Naive thymus-derived CD4-positive, alpha-beta T cell (primary cell): ENCODE measurements at regions of chrX and their contacts with region 1.

Region 1: DNA sequence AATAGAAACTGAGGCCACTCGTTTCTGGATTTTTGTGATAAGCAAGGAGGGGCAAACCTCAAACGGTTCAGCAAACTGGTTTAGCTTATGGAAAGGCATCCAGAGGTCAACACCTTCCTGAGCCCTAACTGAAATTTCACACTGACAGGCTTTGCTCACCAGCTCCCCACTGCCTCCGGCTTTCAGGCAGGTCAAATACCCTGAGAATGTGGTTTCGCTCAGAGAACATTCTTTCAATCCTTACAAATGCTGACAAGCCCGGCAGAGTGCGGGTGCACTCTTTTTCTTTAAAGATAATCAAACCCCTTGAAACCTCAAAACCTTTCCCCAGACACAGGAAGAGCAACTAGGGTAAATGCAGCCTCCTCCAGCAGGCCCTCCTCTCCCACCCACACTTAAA is 41.5 kb downstream of the CD40LG start:
- DNase-seq: peak in 2 of 9 donors; percentile 17 to 31
- ATAC-seq: peak; percentile 23
- H3K4me3 ChIP-seq: no peak overlapping the region
- H3K4me3 Mint-ChIP-seq: peak overlapping the region; percentile 55 to 80 (median 64)
- H3K27ac ChIP-seq: peak overlapping the region; percentile 81
- H3K27ac Mint-ChIP-seq: peak overlapping the region; percentile 76 to 97 (median 91)
- H3K4me1 ChIP-seq: peaks cover 71 to 81% of the 10 kb centered on the region in 2 donors
- H3K4me1 Mint-ChIP-seq: peaks cover 17 to 76% (median 62%) of the 10 kb centered on the region in 7 donors
- H3K27me3 ChIP-seq: no peaks in the 10 kb centered on the region
- H3K27me3 Mint-ChIP-seq: no peaks in the 10 kb centered on the region

Region 2: DNA sequence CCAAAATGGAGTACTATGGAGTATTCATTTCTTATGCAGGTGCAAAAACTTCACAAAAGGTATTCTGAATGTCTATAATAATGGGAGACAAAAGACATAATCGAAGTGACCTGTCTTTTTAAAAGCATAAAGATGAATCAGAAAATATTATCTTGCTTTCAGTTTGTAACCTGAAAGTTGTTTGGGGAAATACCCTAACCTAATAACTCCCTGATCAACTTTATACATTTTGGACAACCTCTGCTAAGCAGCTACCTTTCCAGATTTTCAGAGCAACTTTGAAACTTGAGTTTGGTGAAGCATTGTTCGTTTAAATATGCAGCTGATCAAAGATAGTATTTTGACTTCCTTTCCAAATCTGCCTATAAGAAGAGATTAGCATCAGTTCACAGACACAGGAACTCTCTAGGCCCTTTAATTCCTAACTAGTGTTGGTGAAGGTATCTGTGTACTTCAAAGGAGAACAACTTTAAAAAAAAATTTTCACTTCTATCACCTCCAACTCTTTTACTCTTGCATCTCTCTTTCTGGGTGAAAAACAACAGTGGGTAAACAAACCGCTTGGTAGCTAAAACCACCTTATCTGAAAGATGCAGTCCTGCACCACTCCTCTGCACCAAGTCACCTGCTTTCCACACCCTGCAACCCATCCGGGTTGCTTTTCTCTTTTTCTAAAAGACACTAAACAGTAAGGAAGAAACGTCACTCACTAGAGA is 15.0 kb before region 1 on chrX:
- CTCF ChIA-PET with region 1: interaction called, 9 read pairs
- POLR2A ChIA-PET with region 1: interaction called, 15 read pairs
- intact Hi-C with region 1: loop called (anchors 1 kb)
- DNase-seq: peak in 7 of 9 donors; percentile 52 to 85 (median 72)
- ATAC-seq: peak; percentile 91
- H3K4me3 ChIP-seq: peak overlapping the region; percentile 16
- H3K4me3 Mint-ChIP-seq: peak overlapping the region; percentile 56 to 79 (median 72)
- H3K27ac ChIP-seq: peak overlapping the region; percentile 65
- H3K27ac Mint-ChIP-seq: peak overlapping the region; percentile 78 to 97 (median 93)
- H3K4me1 ChIP-seq: peaks cover 67 to 77% of the 10 kb centered on the region in 2 donors
- H3K4me1 Mint-ChIP-seq: peaks cover 36 to 98% (median 92%) of the 10 kb centered on the region in 7 donors
- H3K27me3 ChIP-seq: no peaks in the 10 kb centered on the region
- H3K27me3 Mint-ChIP-seq: no peaks in the 10 kb centered on the region